GM10248 (cell line): ENCODE measurements at regions of chr14 and their contacts with region 1.

Region 1: DNA sequence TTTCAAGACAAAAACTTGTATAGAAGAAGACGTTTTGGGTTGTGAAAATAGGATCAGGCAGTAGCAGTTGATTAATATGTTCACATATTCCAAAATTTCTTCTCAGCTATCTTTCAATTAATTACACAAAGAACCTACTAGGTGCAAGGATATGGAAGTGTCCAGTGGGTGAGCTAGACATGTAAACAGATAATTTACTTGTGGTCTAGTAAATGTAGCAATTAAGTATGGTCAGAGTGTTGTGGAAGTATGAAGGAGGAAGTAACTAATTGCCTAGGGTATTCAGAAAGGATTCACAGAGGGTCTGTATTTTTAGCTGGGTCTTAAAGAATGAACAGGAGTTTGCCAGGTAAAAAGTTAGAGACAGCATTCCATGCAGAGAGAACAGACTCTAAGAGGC is 5.9 kb downstream of the GOLGA5 start:
- DNase-seq: no peak
- CTCF ChIP-seq: no peak

Region 2: GRCh38 chr14:92813201-92813600 is 13.2 kb after region 1 on chr14:
- CTCF ChIA-PET with region 1: interaction called, 12 read pairs
- POLR2A ChIA-PET with region 1: interaction called, 6 read pairs
- DNase-seq: no peak
- CTCF ChIP-seq: no peak

Region 3: GRCh38 chr14:92846162-92846897 is 46.3 kb after region 1 on chr14:
- CTCF ChIA-PET with region 1: no interaction called
- POLR2A ChIA-PET with region 1: no interaction called
- DNase-seq: peak; percentile 71
- CTCF ChIP-seq: no peak